Naive thymus-derived CD4-positive, alpha-beta T cell (primary cell): ENCODE measurements at regions of chr4 and their contacts with region 1.

Region 1: DNA sequence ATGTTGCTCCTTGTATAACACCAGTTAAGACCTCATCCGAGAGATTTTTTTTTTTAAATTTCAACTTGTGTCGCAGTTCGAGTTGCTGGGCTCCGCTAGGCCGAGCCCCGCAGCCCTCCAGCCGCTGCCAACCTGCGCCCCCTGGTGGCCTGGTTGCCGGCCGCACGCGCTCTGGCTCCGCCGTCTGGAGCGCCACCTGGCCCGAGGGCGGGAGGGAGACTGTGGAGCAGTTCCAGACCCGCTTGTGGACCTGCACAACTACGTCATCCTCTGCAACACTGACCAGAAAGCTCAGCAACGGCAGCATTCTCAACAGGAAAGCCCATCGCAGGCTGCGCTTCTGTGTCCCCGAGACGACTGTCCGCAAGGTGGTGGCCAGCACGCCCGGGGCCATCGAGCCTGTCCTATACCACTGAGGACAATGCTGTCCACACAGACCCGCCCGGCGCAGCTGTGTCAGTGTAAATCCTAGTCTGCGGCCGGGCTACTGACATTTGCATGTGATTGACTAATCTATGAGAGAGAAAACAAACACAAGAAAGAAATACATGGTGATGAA is 39.1 kb downstream of the ARL9 start:
- DNase-seq: peak; percentile 72 to 93 (median 84)
- ATAC-seq: peak; percentile 100
- H3K4me3 ChIP-seq: peak overlapping the region; percentile 68
- H3K4me3 Mint-ChIP-seq: peak overlapping the region; percentile 18 to 81 (median 74)
- H3K27ac ChIP-seq: no peak overlapping the region
- H3K27ac Mint-ChIP-seq: peak overlapping the region in 7 of 9 donors; percentile 25 to 79 (median 63)
- H3K4me1 ChIP-seq: peaks cover 0 to 4% of the 10 kb centered on the region in 2 donors
- H3K4me1 Mint-ChIP-seq: peaks cover 8 to 22% (median 21%) of the 10 kb centered on the region in 7 donors
- H3K27me3 ChIP-seq: no peaks in the 10 kb centered on the region
- H3K27me3 Mint-ChIP-seq: peaks cover 0 to 25% (median 7%) of the 10 kb centered on the region in 5 donors

Region 2: DNA sequence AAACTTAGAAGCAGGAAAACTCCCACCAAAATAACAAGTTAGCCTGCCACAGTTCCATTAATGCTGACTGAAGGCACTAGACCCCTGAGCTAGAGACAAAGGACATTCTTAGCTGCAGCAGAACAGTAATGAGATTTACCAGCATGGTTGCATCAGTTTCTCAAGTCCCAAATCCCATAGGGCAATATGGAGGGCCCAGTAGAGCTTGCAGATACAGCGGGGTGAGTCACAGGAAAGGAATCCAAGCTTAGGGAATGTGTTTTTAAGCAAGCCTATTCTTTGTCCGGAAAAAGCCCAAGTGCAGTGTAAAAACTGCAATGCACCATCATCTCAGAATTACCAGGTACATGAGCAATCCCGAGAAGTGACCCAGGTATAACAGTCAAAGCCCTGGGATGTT is 776.4 kb before region 1 on chr4:
- CTCF ChIA-PET with region 1: no interaction called
- POLR2A ChIA-PET with region 1: no interaction called
- intact Hi-C with region 1: no loop called
- DNase-seq: no peak
- ATAC-seq: no peak
- H3K4me3 ChIP-seq: no peak overlapping the region
- H3K4me3 Mint-ChIP-seq: no peak overlapping the region
- H3K27ac ChIP-seq: no peak overlapping the region
- H3K27ac Mint-ChIP-seq: no peak overlapping the region
- H3K4me1 ChIP-seq: no peaks in the 10 kb centered on the region
- H3K4me1 Mint-ChIP-seq: no peaks in the 10 kb centered on the region
- H3K27me3 ChIP-seq: no peaks in the 10 kb centered on the region
- H3K27me3 Mint-ChIP-seq: peaks cover 3 to 24% (median 20%) of the 10 kb centered on the region in 5 donors

Region 3: DNA sequence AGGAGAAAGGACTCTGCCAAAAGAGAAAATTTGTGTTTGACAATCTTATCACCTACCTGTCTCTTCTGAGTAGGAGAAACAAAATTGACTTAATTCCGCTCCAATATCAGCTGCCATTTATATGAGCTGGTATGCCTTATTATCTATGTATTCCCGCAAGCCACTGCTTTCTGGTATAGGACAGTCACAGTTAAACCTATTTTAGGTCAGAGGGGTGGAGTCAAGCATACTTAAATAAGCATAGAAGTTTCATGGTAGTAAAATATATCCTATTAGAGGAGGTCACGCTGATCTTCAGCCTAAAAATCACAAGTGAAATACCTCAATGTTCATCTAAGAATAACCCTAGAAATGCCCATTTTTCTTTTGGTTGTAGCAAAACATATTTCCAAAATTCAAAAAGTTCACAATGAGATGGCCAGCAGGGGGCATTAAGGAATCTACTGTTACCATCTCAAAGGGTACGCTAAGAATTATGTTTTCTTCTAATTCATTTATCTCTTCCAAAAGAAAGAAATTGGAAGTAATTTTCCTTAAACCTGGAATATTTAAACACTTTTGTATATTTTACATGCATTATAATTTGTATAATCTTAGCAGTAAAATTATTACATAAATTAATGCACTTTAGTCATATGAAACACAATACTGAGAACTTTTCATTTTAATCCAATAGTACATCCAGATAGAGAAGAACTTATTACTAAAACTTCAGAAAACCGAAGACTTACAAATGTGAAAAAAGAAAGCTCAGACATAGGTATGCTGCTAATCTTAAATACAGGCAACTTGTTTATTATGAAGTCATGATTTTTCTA is 119.7 kb before region 1 on chr4:
- CTCF ChIA-PET with region 1: interaction called, 47 read pairs
- POLR2A ChIA-PET with region 1: no interaction called
- intact Hi-C with region 1: loop called (anchors 1 kb)
- DNase-seq: peak in 7 of 9 donors; percentile 22 to 59 (median 48)
- ATAC-seq: peak; percentile 49
- H3K4me3 ChIP-seq: no peak overlapping the region
- H3K4me3 Mint-ChIP-seq: no peak overlapping the region
- H3K27ac ChIP-seq: no peak overlapping the region
- H3K27ac Mint-ChIP-seq: peak overlapping the region in 1 of 9 donors; percentile 1
- H3K4me1 ChIP-seq: no peaks in the 10 kb centered on the region
- H3K4me1 Mint-ChIP-seq: peaks cover 4 to 27% (median 13%) of the 10 kb centered on the region in 7 donors
- H3K27me3 ChIP-seq: no peaks in the 10 kb centered on the region
- H3K27me3 Mint-ChIP-seq: no peaks in the 10 kb centered on the region

Region 4: GRCh38 chr4:56505269-56506130 is 39.2 kb before region 1 on chr4 and contains the start of gene ARL9:
- CTCF ChIA-PET with region 1: no interaction called
- POLR2A ChIA-PET with region 1: no interaction called
- intact Hi-C with region 1: loop called (anchors 1 kb)
- DNase-seq: peak; percentile 49 to 77 (median 68)
- ATAC-seq: peak; percentile 96
- H3K4me3 ChIP-seq: peak within 1 kb of the TSS; percentile 67
- H3K4me3 Mint-ChIP-seq: peak within 1 kb of the TSS; percentile 66 to 96 (median 88)
- H3K27ac ChIP-seq: peak within 1 kb of the TSS; percentile 44
- H3K27ac Mint-ChIP-seq: peak within 1 kb of the TSS in 8 of 9 donors; percentile 49 to 88 (median 72)
- H3K4me1 ChIP-seq: peaks cover 7 to 8% of the 10 kb centered on the region in 2 donors
- H3K4me1 Mint-ChIP-seq: peaks cover 13 to 20% (median 17%) of the 10 kb centered on the region in 7 donors
- H3K27me3 ChIP-seq: no peaks in the 10 kb centered on the region
- H3K27me3 Mint-ChIP-seq: peaks cover 0 to 12% (median 0%) of the 10 kb centered on the region in 5 donors
- total RNA-seq, gene ARL9: 0.19 to 0.43 TPM in 2 of 5 experiments, not detected in the others

Region 5: GRCh38 chr4:56530269-56531148 is 14.1 kb before region 1 on chr4:
- CTCF ChIA-PET with region 1: no interaction called
- POLR2A ChIA-PET with region 1: no interaction called
- intact Hi-C with region 1: loop called (anchors 1 kb)
- DNase-seq: peak; percentile 53 to 75 (median 59)
- ATAC-seq: peak; percentile 99
- H3K4me3 ChIP-seq: peak overlapping the region; percentile 91
- H3K4me3 Mint-ChIP-seq: peak overlapping the region in 1 of 10 donors; percentile 70
- H3K27ac ChIP-seq: peak overlapping the region; percentile 44
- H3K27ac Mint-ChIP-seq: peak overlapping the region in 3 of 9 donors; percentile 26 to 55 (median 38)
- H3K4me1 ChIP-seq: peaks cover 0 to 4% of the 10 kb centered on the region in 2 donors
- H3K4me1 Mint-ChIP-seq: peaks cover 0 to 2% (median 0%) of the 10 kb centered on the region in 7 donors
- H3K27me3 ChIP-seq: peaks cover 0 to 4% of the 10 kb centered on the region in 2 donors
- H3K27me3 Mint-ChIP-seq: peaks cover 0 to 22% (median 7%) of the 10 kb centered on the region in 5 donors

Region 6: DNA sequence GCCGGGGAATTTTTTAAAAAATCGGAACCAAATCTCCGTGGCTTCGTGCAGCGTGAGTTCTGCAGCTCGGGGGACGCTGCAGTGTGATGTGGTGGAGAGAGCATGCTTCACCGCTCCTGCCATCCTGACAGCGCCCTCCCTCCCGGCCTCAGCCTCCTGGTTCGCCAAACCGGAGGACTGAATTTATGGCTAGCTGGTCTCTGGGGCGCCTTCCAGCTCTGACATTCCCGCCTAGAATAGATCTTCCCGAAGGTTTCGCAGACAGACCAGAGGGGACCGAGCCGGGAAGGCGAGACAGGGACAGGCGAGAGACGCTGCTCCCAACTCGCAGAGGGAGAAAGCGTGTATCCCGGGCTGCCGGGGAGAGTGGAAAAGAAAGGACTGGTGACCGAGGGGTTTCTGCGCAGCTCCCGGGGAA is 110.6 kb after region 1 on chr4:
- CTCF ChIA-PET with region 1: no interaction called
- POLR2A ChIA-PET with region 1: no interaction called
- intact Hi-C with region 1: loop called in 1 of 2 experiments (anchors 5 kb)
- DNase-seq: peak in 4 of 9 donors; percentile 14 to 26 (median 22)
- ATAC-seq: peak; percentile 33
- H3K4me3 ChIP-seq: peak overlapping the region; percentile 66
- H3K4me3 Mint-ChIP-seq: peak overlapping the region; percentile 85 to 99 (median 90)
- H3K27ac ChIP-seq: no peak overlapping the region
- H3K27ac Mint-ChIP-seq: peak overlapping the region in 7 of 9 donors; percentile 2 to 82 (median 28)
- H3K4me1 ChIP-seq: peaks cover 16 to 36% of the 10 kb centered on the region in 2 donors
- H3K4me1 Mint-ChIP-seq: peaks cover 16 to 59% (median 34%) of the 10 kb centered on the region in 7 donors
- H3K27me3 ChIP-seq: peaks cover 0 to 3% of the 10 kb centered on the region in 2 donors
- H3K27me3 Mint-ChIP-seq: peaks cover 9 to 43% (median 33%) of the 10 kb centered on the region in 5 donors

Region 7: DNA sequence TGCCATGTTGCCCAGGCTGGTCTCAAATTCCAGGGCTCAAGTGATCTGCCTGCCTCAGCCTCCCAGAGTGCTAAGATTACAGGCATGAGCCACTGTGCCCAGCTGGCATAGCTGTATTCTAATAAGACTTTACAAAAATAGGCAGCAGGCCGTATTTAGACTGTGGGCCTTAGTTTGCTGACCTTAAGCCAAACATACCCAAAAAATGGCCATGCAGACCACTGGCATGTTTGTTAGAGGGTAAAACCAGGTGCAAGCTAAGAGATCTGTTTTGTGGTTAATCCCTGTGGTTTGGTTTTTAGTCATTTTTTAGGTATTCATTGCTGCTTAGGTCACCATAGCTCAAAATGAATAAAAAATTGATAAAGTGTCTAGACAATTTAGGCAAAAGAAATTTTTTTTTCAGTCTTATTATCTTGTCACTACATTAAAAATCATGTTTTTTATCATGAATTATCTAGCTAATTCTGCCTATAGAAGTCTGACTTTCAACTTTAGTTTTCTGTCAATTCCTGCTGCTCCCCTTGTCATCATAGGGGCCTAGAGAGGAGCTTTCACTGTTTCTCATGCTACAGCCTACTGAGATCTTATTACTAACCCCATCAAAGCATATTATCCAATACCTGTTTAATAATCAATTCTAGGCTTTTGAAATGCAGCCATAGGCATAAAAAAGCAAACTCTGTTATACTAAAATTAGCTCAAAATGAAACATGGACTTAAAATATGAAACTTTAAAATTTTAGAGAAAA is 284.3 kb after region 1 on chr4:
- CTCF ChIA-PET with region 1: no interaction called
- POLR2A ChIA-PET with region 1: no interaction called
- intact Hi-C with region 1: loop called in 1 of 2 experiments (anchors 10 kb)
- DNase-seq: no peak
- ATAC-seq: no peak
- H3K4me3 ChIP-seq: no peak overlapping the region
- H3K4me3 Mint-ChIP-seq: no peak overlapping the region
- H3K27ac ChIP-seq: no peak overlapping the region
- H3K27ac Mint-ChIP-seq: no peak overlapping the region
- H3K4me1 ChIP-seq: no peaks in the 10 kb centered on the region
- H3K4me1 Mint-ChIP-seq: peaks cover 0 to 12% (median 0%) of the 10 kb centered on the region in 7 donors
- H3K27me3 ChIP-seq: no peaks in the 10 kb centered on the region
- H3K27me3 Mint-ChIP-seq: peaks cover 0 to 15% (median 0%) of the 10 kb centered on the region in 5 donors